ENCODE measurements at regions of chr19 and their contacts with region 1.

Region 1: GRCh38 chr19:49409441-49410029 is 13.7 kb downstream of the PTH2 start:
- DNase-seq: peak; percentile 83
- H3K4me3 Mint-ChIP-seq: peak overlapping the region; percentile 54
- H3K27ac Mint-ChIP-seq: peak overlapping the region; percentile 85
- H3K4me1 Mint-ChIP-seq: peaks cover 47% of the 10 kb centered on the region
- H3K27me3 Mint-ChIP-seq: no peaks in the 10 kb centered on the region

Region 2: GRCh38 chr19:49421039-49421877 is 11.7 kb after region 1 on chr19:
- intact Hi-C with region 1: loop called (anchors 2 kb)
- DNase-seq: peak; percentile 88
- H3K4me3 Mint-ChIP-seq: peak overlapping the region; percentile 62
- H3K27ac Mint-ChIP-seq: peak overlapping the region; percentile 42
- H3K4me1 Mint-ChIP-seq: peaks cover 38% of the 10 kb centered on the region
- H3K27me3 Mint-ChIP-seq: peaks cover 83% of the 10 kb centered on the region